ENCODE measurements at regions of chr17 and their contacts with region 1.

Region 1: DNA sequence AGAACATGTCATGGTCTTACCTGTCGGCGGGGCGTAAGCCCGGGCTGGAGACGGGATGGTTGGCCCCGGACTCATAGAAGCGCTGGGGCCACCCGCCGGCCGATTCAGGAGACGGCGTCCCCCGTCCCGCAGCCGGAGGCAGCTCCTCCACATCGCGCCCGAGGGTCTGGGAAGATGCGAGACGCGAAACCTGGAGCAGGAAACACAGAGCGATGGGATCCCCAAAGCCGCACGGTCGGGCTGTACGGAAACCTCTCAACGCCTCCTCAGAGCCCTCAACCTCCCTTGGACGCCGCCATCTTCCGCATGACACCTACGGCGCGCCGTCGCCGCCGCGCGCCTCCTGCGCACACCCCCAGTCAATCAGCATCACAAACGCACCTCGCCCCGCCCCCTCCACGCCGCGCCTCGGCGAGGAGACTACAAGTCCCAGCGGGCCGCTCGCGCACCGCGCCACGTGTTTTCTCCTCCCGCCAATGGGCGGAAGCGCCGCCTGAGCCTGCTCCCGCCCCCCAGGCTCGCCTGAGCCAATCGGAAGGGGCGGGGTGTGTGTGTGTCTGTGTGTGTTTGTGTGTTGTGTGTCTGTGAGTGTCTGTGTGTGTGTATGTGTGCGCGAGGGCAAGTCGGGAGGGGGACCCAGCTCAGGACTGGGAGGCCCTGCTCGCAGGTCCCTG is at the starts of genes ATPAF2 and GID4:
- DNase-seq: peak; percentile 99 to 100 (median 100)
- ATAC-seq: peak; percentile 96
- H3K4me3 ChIP-seq: peak within 1 kb of the TSS; percentile 79
- H3K4me3 Mint-ChIP-seq: peak within 1 kb of the TSS; percentile 88 to 100 (median 98)
- H3K27ac ChIP-seq: peak within 1 kb of the TSS; percentile 88
- H3K27ac Mint-ChIP-seq: peak within 1 kb of the TSS; percentile 87 to 99 (median 97)
- H3K4me1 ChIP-seq: peaks cover 23 to 30% of the 10 kb centered on the region in 2 donors
- H3K4me1 Mint-ChIP-seq: peaks cover 42 to 70% (median 53%) of the 10 kb centered on the region in 7 donors
- H3K27me3 ChIP-seq: no peaks in the 10 kb centered on the region
- H3K27me3 Mint-ChIP-seq: no peaks in the 10 kb centered on the region
- total RNA-seq, gene ATPAF2: 26.3 to 36.7 (median 32.5) TPM
- total RNA-seq, gene GID4: 6.0 to 11.4 (median 10.0) TPM

Region 2: DNA sequence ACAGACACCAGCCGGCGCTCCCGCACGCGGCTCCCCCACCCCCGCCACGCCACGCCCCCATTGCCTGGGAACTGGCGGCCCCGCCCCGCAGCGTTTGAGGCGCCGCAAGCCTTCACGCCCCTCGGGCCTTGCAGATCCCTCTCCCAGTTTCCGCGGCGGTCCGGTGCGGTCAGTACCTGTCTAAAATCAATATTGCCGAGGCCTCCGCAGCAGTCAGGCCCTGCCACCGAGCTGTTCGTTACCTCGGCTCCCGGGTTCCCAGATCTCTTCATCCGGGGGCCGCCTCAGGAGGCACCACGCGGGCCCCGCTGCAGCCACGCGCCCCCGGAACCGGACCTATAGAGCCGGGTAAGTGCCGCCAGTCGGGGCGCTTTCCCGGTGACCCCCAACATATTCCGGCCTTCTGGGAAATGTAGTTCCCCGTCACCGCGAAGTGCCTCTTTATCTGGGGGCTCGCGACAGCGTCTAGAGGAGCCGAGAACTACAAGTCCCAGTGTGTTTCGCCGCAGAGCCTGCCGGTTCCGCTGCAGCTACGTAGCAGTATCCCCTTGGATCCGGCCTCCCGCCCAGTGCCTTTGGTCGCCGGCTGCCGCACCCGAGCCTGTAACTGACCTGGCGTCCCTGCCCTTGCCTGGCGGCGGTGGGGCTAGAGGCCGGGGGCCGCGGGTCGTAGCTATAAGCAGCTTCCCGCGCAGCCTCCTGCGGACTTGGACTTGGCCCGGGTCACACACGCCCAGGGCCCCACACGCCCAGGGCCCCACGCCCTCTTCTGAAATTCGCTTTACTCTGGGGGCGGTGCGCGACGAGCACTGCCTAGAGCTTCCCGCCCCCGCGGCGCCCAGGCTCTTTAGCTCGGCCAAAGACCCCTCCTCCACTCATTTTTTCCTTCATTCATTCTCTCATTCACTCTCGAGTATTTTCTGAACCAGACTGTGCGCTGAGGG is 447.4 kb before region 1 on chr17 and contains the start of gene PEMT:
- CTCF ChIA-PET with region 1: no interaction called
- POLR2A ChIA-PET with region 1: no interaction called
- intact Hi-C with region 1: loop called (anchors 1 kb)
- DNase-seq: peak; percentile 78 to 96 (median 93)
- ATAC-seq: peak; percentile 95
- H3K4me3 ChIP-seq: peak within 1 kb of the TSS; percentile 93
- H3K4me3 Mint-ChIP-seq: peak within 1 kb of the TSS; percentile 87 to 99 (median 93)
- H3K27ac ChIP-seq: peak within 1 kb of the TSS; percentile 79
- H3K27ac Mint-ChIP-seq: peak within 1 kb of the TSS; percentile 86 to 100 (median 93)
- H3K4me1 ChIP-seq: peaks cover 16 to 18% of the 10 kb centered on the region in 2 donors
- H3K4me1 Mint-ChIP-seq: peaks cover 14 to 32% (median 19%) of the 10 kb centered on the region in 7 donors
- H3K27me3 ChIP-seq: no peaks in the 10 kb centered on the region
- H3K27me3 Mint-ChIP-seq: no peaks in the 10 kb centered on the region
- total RNA-seq, gene PEMT: 9.5 to 15.0 (median 12.1) TPM

Region 3: DNA sequence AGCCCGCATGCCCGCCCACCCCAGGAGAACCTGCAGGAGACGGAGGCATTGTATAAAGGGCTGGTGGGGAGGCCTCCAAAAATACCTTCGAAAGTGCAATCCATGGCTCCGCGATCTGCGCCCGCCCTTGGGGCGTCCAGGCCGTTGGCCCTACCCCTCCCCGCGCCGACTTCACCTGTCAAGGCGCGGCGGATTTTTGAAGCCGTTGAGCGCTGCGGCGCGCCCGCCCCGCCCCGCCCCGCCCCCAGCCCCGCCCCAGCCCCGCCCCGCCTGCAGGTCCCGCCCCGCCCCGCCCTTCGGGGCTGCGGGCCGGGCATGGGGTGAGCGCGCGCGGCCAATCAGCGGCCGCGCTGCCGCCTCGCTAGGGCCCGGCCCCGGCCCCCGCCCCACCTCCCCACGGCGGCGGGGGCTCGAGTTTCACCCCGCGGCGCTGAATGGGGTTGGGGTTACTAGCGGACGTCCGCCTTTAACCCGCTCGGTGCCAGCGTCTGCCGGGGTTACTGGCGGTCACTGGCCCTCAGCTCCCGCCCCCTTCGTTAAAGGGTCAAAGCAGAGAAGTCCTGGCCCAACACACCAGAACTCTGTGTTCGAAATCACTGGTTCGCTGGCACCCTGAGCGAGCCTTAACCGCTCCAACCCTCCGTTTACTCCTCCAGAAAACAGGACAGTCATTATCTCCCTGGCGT is 215.4 kb before region 1 on chr17:
- CTCF ChIA-PET with region 1: interaction called, 4 read pairs
- POLR2A ChIA-PET with region 1: no interaction called
- intact Hi-C with region 1: loop called (anchors 1 kb)
- DNase-seq: peak; percentile 71 to 84 (median 81)
- ATAC-seq: peak; percentile 93
- H3K4me3 ChIP-seq: peak overlapping the region; percentile 68
- H3K4me3 Mint-ChIP-seq: peak overlapping the region; percentile 78 to 86 (median 84)
- H3K27ac ChIP-seq: peak overlapping the region; percentile 74
- H3K27ac Mint-ChIP-seq: peak overlapping the region; percentile 78 to 96 (median 93)
- H3K4me1 ChIP-seq: peaks cover 41 to 81% of the 10 kb centered on the region in 2 donors
- H3K4me1 Mint-ChIP-seq: peaks cover 72 to 95% (median 87%) of the 10 kb centered on the region in 7 donors
- H3K27me3 ChIP-seq: no peaks in the 10 kb centered on the region
- H3K27me3 Mint-ChIP-seq: no peaks in the 10 kb centered on the region

Region 4: DNA sequence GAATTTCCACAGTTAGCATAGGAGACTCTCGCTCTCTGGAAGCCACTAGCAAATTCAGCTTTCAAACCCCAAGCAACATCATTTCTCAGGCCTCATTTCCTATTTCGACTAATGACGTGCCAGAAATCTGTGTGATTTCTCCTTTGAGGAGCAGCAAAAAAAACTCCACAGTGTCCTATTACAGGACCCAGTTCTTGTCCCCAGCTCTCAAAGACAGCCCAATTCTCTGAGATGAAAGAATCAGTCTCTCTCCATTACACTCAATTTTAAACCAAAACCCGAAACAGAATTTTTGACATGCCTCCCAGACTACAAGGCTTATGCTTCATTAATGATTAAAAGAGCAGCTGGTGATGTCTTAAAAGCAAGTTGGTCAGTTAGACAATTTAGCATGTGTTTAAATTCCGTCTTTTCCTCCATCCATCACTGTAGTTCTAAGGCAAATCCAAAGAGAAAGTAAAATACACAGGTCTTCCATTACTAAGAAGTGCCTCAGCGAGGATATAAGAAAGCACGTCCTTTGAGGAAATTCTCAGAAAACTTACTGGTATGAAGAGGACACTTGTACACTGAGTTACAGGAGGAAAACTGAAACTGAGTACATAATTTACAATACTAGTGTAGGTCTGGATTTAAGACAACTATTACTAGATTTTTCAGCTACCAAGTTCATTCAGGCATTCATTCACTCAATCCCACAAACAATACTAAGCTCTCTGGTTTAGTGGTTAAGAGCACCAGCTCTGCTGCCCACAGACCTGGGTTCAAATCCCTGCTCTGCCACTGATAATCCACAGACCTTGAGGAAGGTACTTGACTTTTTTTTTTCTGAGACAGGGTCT is 79.3 kb before region 1 on chr17:
- CTCF ChIA-PET with region 1: no interaction called
- POLR2A ChIA-PET with region 1: no interaction called
- intact Hi-C with region 1: loop called in 1 of 2 experiments (anchors 2 kb)
- DNase-seq: peak in 7 of 9 donors; percentile 10 to 44 (median 27)
- ATAC-seq: peak; percentile 38
- H3K4me3 ChIP-seq: peak overlapping the region; percentile 37
- H3K4me3 Mint-ChIP-seq: peak overlapping the region; percentile 60 to 94 (median 86)
- H3K27ac ChIP-seq: peak overlapping the region; percentile 79
- H3K27ac Mint-ChIP-seq: peak overlapping the region; percentile 93 to 100 (median 98)
- H3K4me1 ChIP-seq: peaks cover 26 to 64% of the 10 kb centered on the region in 2 donors
- H3K4me1 Mint-ChIP-seq: peaks cover 50 to 87% (median 76%) of the 10 kb centered on the region in 7 donors
- H3K27me3 ChIP-seq: no peaks in the 10 kb centered on the region
- H3K27me3 Mint-ChIP-seq: no peaks in the 10 kb centered on the region

Region 5: GRCh38 chr17:18070861-18071340 is 31.9 kb after region 1 on chr17:
- CTCF ChIA-PET with region 1: no interaction called
- POLR2A ChIA-PET with region 1: no interaction called
- intact Hi-C with region 1: no loop called
- DNase-seq: no peak
- ATAC-seq: peak; percentile 22
- H3K4me3 ChIP-seq: no peak overlapping the region
- H3K4me3 Mint-ChIP-seq: peak overlapping the region in 1 of 10 donors; percentile 54
- H3K27ac ChIP-seq: no peak overlapping the region
- H3K27ac Mint-ChIP-seq: peak overlapping the region in 1 of 9 donors; percentile 28
- H3K4me1 ChIP-seq: peaks cover 0 to 4% of the 10 kb centered on the region in 2 donors
- H3K4me1 Mint-ChIP-seq: peaks cover 0 to 14% (median 8%) of the 10 kb centered on the region in 7 donors
- H3K27me3 ChIP-seq: no peaks in the 10 kb centered on the region
- H3K27me3 Mint-ChIP-seq: peaks cover 0 to 19% (median 5%) of the 10 kb centered on the region in 5 donors

Region 6: GRCh38 chr17:18314731-18315561 is 275.9 kb after region 1 on chr17 and contains the starts of genes SMCR8 and TOP3A:
- CTCF ChIA-PET with region 1: no interaction called
- POLR2A ChIA-PET with region 1: no interaction called
- intact Hi-C with region 1: loop called (anchors 1 kb)
- DNase-seq: peak; percentile 86 to 99 (median 98)
- ATAC-seq: peak; percentile 96
- H3K4me3 ChIP-seq: peak within 1 kb of the TSS; percentile 95
- H3K4me3 Mint-ChIP-seq: peak within 1 kb of the TSS; percentile 89 to 98 (median 93)
- H3K27ac ChIP-seq: peak within 1 kb of the TSS; percentile 93
- H3K27ac Mint-ChIP-seq: peak within 1 kb of the TSS; percentile 92 to 99 (median 95)
- H3K4me1 ChIP-seq: peaks cover 50 to 54% of the 10 kb centered on the region in 2 donors
- H3K4me1 Mint-ChIP-seq: peaks cover 61 to 88% (median 83%) of the 10 kb centered on the region in 7 donors
- H3K27me3 ChIP-seq: no peaks in the 10 kb centered on the region
- H3K27me3 Mint-ChIP-seq: peaks cover 0 to 2% (median 0%) of the 10 kb centered on the region in 5 donors
- total RNA-seq, gene SMCR8: 29.0 to 61.7 (median 52.1) TPM
- total RNA-seq, gene TOP3A: 39.0 to 74.9 (median 43.6) TPM